ENCODE measurements at regions of chr3 and their contacts with region 1.

Region 1: DNA sequence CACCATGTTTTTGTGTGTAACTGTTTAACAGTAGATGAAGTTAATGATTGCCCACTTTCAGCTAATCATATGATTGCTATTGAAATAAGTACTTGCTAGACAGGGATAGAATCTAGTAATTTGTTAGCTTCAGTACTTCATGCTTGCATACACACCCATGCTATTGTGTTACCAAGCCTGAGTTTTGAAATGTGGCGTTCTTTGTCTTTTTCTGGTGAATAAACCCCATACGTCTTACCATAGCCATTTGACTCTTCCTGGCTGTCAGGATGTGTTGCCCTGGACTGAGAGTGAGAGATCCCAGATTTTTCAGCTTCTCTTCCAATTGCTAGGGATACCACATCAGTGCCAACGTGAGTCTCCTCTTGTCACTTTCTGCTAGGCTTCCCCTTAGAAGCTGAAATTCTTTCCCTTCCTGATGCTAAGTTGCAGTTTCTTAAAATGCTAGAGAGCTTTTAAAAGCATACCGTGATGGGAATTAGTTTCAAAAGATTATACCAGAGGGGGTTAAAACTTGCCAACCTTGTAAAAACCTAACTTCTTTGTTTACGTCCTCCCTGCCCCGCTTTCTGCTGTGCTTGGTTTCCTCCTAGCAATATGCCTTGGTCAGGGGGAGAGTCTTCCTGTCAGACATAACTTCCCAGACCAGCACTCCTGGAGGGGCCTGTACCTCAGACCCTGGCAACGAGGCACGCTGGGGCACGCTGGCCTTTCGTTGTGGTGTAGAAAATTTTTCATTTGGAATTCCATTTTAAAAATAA is 62.9 kb upstream of the ULK4 start:
- DNase-seq: no peak

Region 2: DNA sequence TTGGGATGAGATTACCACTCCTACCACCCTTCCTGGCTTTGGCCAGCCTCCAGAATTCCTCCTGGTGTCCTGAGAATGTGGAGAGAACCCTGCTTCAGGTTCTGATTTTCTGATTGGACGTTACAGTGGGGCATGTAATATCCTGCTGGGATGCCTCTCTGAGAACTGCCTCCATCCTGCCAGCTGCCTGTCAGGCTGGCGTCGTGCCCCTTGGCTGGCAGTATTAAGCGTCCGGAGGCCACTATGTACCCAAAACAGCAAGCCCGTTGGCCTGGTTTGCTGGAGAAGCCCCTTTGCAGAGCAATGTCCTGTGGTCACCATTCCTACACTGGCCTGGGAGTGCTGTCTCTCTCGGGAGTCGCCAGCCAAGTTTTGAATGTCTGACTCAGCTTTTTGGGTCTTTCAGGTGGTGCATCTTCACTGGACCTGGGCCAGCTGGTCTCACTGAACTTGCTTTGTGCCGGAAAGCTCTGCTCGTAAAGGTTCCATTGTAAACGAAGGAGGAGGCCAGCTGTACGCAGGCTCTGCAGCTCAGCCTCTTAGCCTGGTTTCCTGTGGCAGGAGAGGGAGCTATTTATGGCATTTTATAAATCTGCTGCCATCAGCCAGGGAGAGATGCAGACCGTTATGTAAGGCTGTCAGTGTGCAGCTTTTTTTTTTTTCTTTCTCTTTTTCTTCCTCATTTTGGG is 47.3 kb after region 1 on chr3:
- intact Hi-C with region 1: loop called (anchors 5 kb)
- DNase-seq: peak; percentile 56 to 94 (median 71)

Region 3: DNA sequence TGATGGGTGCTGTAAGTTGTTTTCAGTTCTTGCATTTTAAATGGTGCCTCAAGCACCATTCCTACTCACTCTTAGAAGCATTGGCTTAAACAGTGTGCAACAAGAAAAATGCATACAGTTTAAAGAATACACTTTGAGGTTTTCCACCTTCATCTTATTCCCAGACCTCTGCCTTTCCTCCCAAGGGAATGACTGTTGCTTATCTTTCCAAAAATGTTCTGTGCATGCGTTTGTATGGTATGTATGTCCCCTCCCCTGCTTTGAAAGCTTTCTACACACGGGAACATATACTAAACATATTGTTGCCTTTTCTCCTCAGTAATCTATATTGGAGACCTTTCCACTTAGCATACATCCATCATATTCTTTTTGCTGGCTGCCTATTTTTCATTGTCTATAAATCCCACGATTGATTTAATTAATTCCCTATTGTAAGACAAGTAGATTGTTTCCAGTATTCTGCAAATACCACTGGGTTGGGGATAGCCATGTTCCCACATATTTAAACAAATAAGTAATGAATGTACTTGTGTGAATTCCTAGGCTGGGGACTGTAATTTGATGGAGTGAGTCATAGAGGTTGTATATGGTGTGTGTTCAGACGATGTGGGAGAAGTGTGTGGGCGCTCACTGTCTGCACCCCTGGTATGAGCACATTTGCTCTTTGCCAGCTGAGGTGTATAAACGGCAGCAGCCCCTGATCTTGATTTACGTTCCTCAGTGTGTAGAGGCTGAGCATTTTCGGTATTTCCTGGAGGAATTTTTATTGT is 72.2 kb after region 1 on chr3:
- intact Hi-C with region 1: loop called (anchors 5 kb)
- DNase-seq: no peak